Activated CD8-positive, alpha-beta memory T cell treated with anti-CD3 and anti-CD28 coated beads, Interleukin-2, amount 10 ng/mL, durations not matched to agents 7 days and 5 days (primary cell): ENCODE measurements at regions of chr15 and their contacts with region 1.

Region 1: GRCh38 chr15:44584162-44584749 is 47.3 kb downstream of the EIF3J start:
- DNase-seq: peak; percentile 73
- ATAC-seq: peak; percentile 86
- H3K4me3 Mint-ChIP-seq: no peak overlapping the region
- H3K27ac Mint-ChIP-seq: peak overlapping the region; percentile 49
- H3K4me1 Mint-ChIP-seq: peaks cover 4% of the 10 kb centered on the region
- H3K27me3 Mint-ChIP-seq: no peaks in the 10 kb centered on the region

Region 2: DNA sequence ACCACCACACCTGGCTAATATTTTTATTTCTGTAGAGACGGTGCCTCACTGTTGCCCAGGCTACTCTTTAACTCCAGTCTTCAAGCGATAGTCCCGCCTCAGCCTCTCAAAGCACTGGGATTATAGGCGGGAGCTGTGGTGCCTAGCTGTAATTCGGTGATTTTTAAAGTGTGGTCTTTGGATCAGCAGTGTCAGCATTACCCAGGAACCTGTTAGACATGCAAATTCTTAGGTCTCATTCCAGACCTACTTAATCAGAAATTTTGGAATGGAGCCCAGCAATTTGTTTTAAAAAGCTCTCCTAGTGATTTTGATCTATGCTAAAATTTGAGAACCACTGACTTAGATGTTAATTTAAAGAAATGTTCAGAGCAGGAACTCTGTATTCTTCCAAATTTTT is 243.8 kb before region 1 on chr15:
- CTCF ChIA-PET with region 1: no interaction called
- DNase-seq: no peak
- ATAC-seq: no peak
- H3K4me3 Mint-ChIP-seq: no peak overlapping the region
- H3K27ac Mint-ChIP-seq: no peak overlapping the region
- H3K4me1 Mint-ChIP-seq: no peaks in the 10 kb centered on the region
- H3K27me3 Mint-ChIP-seq: no peaks in the 10 kb centered on the region

Region 3: GRCh38 chr15:44500555-44500954 is 83.7 kb before region 1 on chr15:
- CTCF ChIA-PET with region 1: no interaction called
- DNase-seq: no peak
- ATAC-seq: peak; percentile 69
- H3K4me3 Mint-ChIP-seq: no peak overlapping the region
- H3K27ac Mint-ChIP-seq: peak overlapping the region; percentile 70
- H3K4me1 Mint-ChIP-seq: peaks cover 23% of the 10 kb centered on the region
- H3K27me3 Mint-ChIP-seq: no peaks in the 10 kb centered on the region

Region 4: GRCh38 chr15:44545913-44546802 is 38.1 kb before region 1 on chr15:
- CTCF ChIA-PET with region 1: interaction called, 14 read pairs
- DNase-seq: peak; percentile 77
- ATAC-seq: peak; percentile 92
- H3K4me3 Mint-ChIP-seq: peak overlapping the region; percentile 73
- H3K27ac Mint-ChIP-seq: peak overlapping the region; percentile 97
- H3K4me1 Mint-ChIP-seq: peaks cover 42% of the 10 kb centered on the region
- H3K27me3 Mint-ChIP-seq: no peaks in the 10 kb centered on the region

Region 5: GRCh38 chr15:44573386-44573785 is 10.9 kb before region 1 on chr15:
- CTCF ChIA-PET with region 1: interaction called, 22 read pairs
- DNase-seq: no peak
- ATAC-seq: no peak
- H3K4me3 Mint-ChIP-seq: no peak overlapping the region
- H3K27ac Mint-ChIP-seq: no peak overlapping the region
- H3K4me1 Mint-ChIP-seq: peaks cover 10% of the 10 kb centered on the region
- H3K27me3 Mint-ChIP-seq: no peaks in the 10 kb centered on the region

Region 6: DNA sequence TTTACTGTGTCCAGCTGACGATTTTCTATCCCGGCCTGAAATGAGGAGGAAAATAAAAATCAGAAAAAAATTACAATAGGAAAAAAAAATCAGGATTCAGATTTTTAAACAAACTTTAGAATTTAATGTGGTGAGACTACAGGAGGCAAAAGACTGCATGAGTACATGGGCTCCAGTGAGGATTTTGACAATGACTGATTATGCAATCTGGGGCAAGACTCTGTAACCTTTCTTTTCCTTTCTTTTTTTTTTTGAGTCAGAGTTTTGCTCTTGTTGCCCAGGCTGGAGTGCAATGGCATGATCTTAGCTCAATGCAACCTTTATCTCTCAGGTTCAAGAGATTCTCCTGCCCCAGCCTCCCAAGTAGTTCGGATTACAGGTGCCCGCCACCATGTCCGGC is 49.3 kb after region 1 on chr15:
- CTCF ChIA-PET with region 1: interaction called, 10 read pairs
- DNase-seq: no peak
- ATAC-seq: peak; percentile 50
- H3K4me3 Mint-ChIP-seq: no peak overlapping the region
- H3K27ac Mint-ChIP-seq: peak overlapping the region; percentile 73
- H3K4me1 Mint-ChIP-seq: peaks cover 17% of the 10 kb centered on the region
- H3K27me3 Mint-ChIP-seq: no peaks in the 10 kb centered on the region